HCT116 (cell line): ENCODE measurements at regions of chrX and their contacts with region 1.

Region 1: GRCh38 chrX:116480059-116480458 is 17.3 kb upstream of the CT83 start:
- DNase-seq: no peak
- ATAC-seq: no peak
- H3K4me3 ChIP-seq: no peak overlapping the region
- H3K27ac ChIP-seq: no peak overlapping the region
- H3K4me1 ChIP-seq: no peaks in the 10 kb centered on the region
- H3K27me3 ChIP-seq: no peaks in the 10 kb centered on the region
- CTCF ChIP-seq: no peak
- POLR2A ChIP-seq: no peak
- RAD21 ChIP-seq: no peak

Region 2: GRCh38 chrX:116436358-116436816 is 43.7 kb before region 1 on chrX and contains the start of gene SLC6A14:
- CTCF ChIA-PET with region 1: no interaction called
- POLR2A ChIA-PET with region 1: no interaction called
- RAD21 ChIA-PET with region 1: no interaction called
- intact Hi-C with region 1: no loop called
- DNase-seq: no peak
- ATAC-seq: no peak
- H3K4me3 ChIP-seq: no peak within 1 kb of the TSS
- H3K27ac ChIP-seq: no peak within 1 kb of the TSS
- H3K4me1 ChIP-seq: no peaks in the 10 kb centered on the region
- H3K27me3 ChIP-seq: no peaks in the 10 kb centered on the region
- CTCF ChIP-seq: no peak
- POLR2A ChIP-seq: no peak
- RAD21 ChIP-seq: no peak
- total RNA-seq, gene SLC6A14: 0.05 TPM

Region 3: GRCh38 chrX:118254611-118255010 is 1774.6 kb after region 1 on chrX:
- CTCF ChIA-PET with region 1: no interaction called
- POLR2A ChIA-PET with region 1: no interaction called
- RAD21 ChIA-PET with region 1: no interaction called
- intact Hi-C with region 1: loop called (anchors 10 kb)
- DNase-seq: peak; percentile 18
- ATAC-seq: peak; percentile 49; the same call in 1 of the 2 replicates
- H3K4me3 ChIP-seq: no peak overlapping the region
- H3K27ac ChIP-seq: no peak overlapping the region
- H3K4me1 ChIP-seq: no peaks in the 10 kb centered on the region
- H3K27me3 ChIP-seq: no peaks in the 10 kb centered on the region
- CTCF ChIP-seq: peak; percentile 30 to 57 (median 50); a peak in 5 of 6 replicates
- POLR2A ChIP-seq: no peak
- RAD21 ChIP-seq: peak; percentile 56